Esophagus muscularis mucosa (tissue), 4 donors: ENCODE measurements at regions of chr3 and their contacts with region 1.

Region 1: GRCh38 chr3:171646357-171647133 is 163.7 kb downstream of the PLD1 start:
- DNase-seq: no peak
- H3K4me3 ChIP-seq: no peak overlapping the region
- H3K27ac ChIP-seq: peak overlapping the region; percentile 42 to 52 (median 42)
- H3K4me1 ChIP-seq: peaks cover 8 to 27% (median 16%) of the 10 kb centered on the region in 4 donors
- H3K27me3 ChIP-seq: no peaks in the 10 kb centered on the region
- CTCF ChIP-seq: peak; percentile 73 to 83 (median 78)
- EP300 ChIP-seq: no peak
- POLR2A ChIP-seq: no peak

Region 2: DNA sequence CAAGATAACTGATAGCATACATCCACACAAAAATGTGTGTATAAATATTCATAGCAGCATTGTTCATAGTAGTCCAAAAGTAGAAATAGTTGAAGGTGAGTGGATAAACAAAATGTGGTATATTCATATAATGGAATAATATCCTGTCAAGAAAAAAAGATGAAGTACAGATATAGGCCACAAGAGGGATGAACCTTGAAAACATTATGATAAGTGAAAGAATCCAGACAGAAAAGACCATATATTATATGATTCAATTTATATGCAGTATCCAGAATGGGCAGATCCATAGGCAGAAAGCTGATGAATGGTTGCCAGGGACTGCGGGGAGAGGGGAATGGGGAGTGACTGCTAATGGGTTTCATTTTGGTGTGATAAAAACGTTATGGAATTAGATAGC is 132.1 kb before region 1 on chr3:
- intact Hi-C with region 1: no loop called
- DNase-seq: no peak
- H3K4me3 ChIP-seq: no peak overlapping the region
- H3K27ac ChIP-seq: no peak overlapping the region
- H3K4me1 ChIP-seq: no peaks in the 10 kb centered on the region
- H3K27me3 ChIP-seq: no peaks in the 10 kb centered on the region
- CTCF ChIP-seq: no peak
- EP300 ChIP-seq: no peak
- POLR2A ChIP-seq: no peak

Region 3: DNA sequence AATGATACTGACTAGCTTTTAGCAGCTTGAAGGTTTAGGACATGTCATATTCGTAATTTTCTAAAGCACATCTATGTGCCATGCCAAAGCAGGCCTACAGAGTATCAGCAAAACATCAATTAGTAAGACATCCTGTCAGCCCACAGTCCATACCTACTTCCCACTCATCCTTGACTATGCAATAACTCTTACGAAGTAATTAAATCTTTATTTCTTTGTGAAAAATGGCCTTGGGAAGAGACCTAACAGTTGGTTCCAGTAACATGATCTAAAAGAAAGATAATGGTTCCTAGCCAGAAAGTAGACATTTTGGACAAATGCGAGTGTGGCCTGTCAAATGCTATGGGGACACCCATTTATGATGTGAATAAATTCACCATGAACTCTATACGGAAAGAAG is 13.8 kb before region 1 on chr3:
- intact Hi-C with region 1: no loop called
- DNase-seq: no peak
- H3K4me3 ChIP-seq: no peak overlapping the region
- H3K27ac ChIP-seq: no peak overlapping the region
- H3K4me1 ChIP-seq: peaks cover 0 to 6% (median 0%) of the 10 kb centered on the region in 4 donors
- H3K27me3 ChIP-seq: no peaks in the 10 kb centered on the region
- CTCF ChIP-seq: no peak
- EP300 ChIP-seq: no peak
- POLR2A ChIP-seq: no peak

Region 4: GRCh38 chr3:171772427-171773056 is 126.0 kb after region 1 on chr3:
- intact Hi-C with region 1: loop called (anchors 5 kb)
- DNase-seq: no peak
- H3K4me3 ChIP-seq: no peak overlapping the region
- H3K27ac ChIP-seq: no peak overlapping the region
- H3K4me1 ChIP-seq: peaks cover 12 to 61% (median 39%) of the 10 kb centered on the region in 4 donors
- H3K27me3 ChIP-seq: no peaks in the 10 kb centered on the region
- CTCF ChIP-seq: peak; percentile 58 to 71 (median 69)
- EP300 ChIP-seq: no peak
- POLR2A ChIP-seq: no peak

Region 5: GRCh38 chr3:171829841-171830517 is 183.4 kb after region 1 on chr3:
- intact Hi-C with region 1: loop called (anchors 2 kb)
- DNase-seq: no peak
- H3K4me3 ChIP-seq: no peak overlapping the region
- H3K27ac ChIP-seq: peak overlapping the region; percentile 46 to 64 (median 52)
- H3K4me1 ChIP-seq: peaks cover 27 to 41% (median 33%) of the 10 kb centered on the region in 4 donors
- H3K27me3 ChIP-seq: no peaks in the 10 kb centered on the region
- CTCF ChIP-seq: peak; percentile 69 to 84 (median 71)
- EP300 ChIP-seq: no peak
- POLR2A ChIP-seq: no peak

Region 6: GRCh38 chr3:172341482-172342059 is 695.0 kb after region 1 on chr3:
- intact Hi-C with region 1: loop called (anchors 10 kb)
- DNase-seq: no peak
- H3K4me3 ChIP-seq: no peak overlapping the region
- H3K27ac ChIP-seq: no peak overlapping the region
- H3K4me1 ChIP-seq: peaks cover 0 to 10% (median 0%) of the 10 kb centered on the region in 4 donors
- H3K27me3 ChIP-seq: no peaks in the 10 kb centered on the region
- CTCF ChIP-seq: peak; percentile 68 to 69 (median 68)
- EP300 ChIP-seq: no peak
- POLR2A ChIP-seq: no peak

Region 7: DNA sequence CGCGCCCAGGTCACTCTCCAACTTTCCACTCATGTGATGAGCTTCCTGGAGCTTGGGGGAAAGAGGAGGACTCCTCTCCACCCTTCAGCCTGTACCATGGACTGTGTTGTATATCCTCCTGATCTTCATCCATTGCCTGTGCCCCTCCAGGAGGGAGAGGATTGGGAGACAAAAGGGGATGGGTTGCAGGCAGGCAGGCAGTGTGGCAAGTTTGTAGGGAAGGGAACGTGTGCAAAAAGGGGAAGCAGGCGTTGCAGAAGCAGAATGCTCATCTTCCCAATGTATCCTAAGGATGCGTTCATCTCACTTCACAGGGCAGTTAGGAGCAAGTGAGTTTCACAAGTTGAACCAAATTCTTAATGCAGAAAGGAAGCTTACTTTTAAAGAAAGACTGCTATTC is 829.8 kb after region 1 on chr3:
- intact Hi-C with region 1: loop called (anchors 10 kb)
- DNase-seq: no peak
- H3K4me3 ChIP-seq: peak overlapping the region in 3 of 4 donors; percentile 41 to 53 (median 46)
- H3K27ac ChIP-seq: no peak overlapping the region
- H3K4me1 ChIP-seq: peaks cover 0 to 5% (median 2%) of the 10 kb centered on the region in 4 donors
- H3K27me3 ChIP-seq: no peaks in the 10 kb centered on the region
- CTCF ChIP-seq: no peak
- EP300 ChIP-seq: no peak
- POLR2A ChIP-seq: no peak